H1 (cell line): ENCODE measurements at regions of chr1 and their contacts with region 1.

Region 1: DNA sequence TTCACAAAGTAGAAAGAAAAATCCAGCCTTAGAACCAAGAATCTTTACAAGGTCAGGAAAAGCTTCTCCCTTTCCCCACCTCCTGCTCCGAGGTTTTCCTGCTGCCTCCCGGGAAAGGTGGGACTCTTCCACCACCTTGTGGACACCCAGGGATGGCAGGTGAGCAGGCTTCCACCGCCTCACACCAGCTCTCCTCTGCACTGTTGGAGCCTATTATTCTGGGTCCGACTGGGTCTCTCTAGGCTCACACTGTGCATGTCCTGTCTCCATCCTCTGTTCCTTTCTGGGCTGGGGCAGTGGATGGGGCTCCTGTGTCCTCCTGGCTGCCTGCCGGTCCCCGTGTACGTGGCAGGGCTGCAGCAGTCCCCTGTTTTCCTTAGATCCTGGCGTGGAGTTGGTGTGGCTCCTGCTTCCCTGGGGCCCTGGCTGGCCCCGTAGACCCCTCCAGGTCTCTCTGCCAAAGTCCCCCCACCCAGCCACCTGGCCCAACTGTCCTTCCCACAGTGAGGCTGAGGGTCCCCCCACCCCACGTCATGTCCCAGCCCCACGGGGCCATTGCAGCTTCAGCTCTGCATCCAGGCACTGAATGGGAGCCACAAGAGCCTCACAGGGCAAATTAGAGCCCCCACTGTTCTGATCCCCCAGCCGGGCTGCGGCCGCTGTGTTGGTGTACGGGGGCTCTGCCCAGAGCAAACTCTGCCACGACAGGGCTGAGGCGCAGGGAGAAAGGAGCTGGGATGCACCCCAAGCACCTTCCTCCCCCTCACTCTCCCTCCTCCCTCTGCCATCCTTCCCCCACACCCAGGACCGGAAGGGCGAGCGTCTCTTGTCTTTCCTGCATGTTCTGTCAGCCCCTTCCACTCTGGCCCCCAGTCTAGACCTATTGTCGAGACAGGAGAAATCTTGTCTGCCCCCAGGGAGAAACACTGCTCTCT is 3.3 kb upstream of the SLC45A1 start:
- DNase-seq: peak; percentile 46 to 86
- H3K4me3 ChIP-seq: no peak overlapping the region
- H3K27ac ChIP-seq: no peak overlapping the region
- H3K4me1 ChIP-seq: peaks cover 0 to 16% (median 10%) of the 10 kb centered on the region in 4 experiments; a peak in 6 of 7 replicates
- H3K27me3 ChIP-seq: peaks cover 0 to 25% (median 13%) of the 10 kb centered on the region in 4 experiments; a peak in 6 of 7 replicates
- CTCF ChIP-seq: peak; percentile 94 to 97 (median 96)
- EP300 ChIP-seq: no peak
- POLR2A ChIP-seq: no peak
- RAD21 ChIP-seq: peak; percentile 99 to 100

Region 2: DNA sequence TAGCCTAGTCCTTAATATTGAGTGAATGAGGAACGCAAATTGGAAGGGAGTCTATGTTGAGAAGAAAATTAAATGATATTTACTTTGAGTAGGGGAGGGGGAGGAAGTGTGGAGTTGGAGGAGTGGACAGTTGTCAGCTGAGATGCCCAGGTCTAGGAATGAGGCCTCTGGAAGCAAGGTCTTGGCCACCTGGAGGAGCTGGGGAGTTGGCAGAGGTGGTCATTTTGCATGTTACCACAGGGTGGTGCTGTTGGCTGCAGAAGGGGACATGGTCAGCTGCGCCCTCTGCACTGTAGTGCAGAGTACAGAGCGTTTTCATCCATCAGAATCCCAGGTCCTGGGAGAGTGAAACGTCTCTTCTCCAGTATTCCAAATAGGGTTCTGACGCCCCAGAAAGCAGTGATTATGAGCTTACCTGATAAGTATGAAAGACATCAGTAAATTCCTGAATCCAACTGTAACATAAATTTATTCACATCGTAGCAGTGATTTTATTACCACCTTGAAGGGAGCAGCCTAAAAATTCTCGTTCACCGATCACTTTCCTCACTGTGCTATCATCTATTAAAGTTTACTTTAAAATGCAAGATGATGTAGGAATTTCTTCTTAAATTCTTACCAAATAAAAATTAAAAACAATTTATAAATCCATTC is 339.3 kb before region 1 on chr1:
- CTCF ChIA-PET with region 1: interaction called, 249 read pairs
- POLR2A ChIA-PET with region 1: interaction called, 3 read pairs
- DNase-seq: peak in 1 of 2 experiments; percentile 90
- H3K4me3 ChIP-seq: no peak overlapping the region
- H3K27ac ChIP-seq: no peak overlapping the region
- H3K4me1 ChIP-seq: no peaks in the 10 kb centered on the region
- H3K27me3 ChIP-seq: no peaks in the 10 kb centered on the region
- CTCF ChIP-seq: peak; percentile 97 to 100 (median 100)
- EP300 ChIP-seq: no peak
- POLR2A ChIP-seq: no peak
- RAD21 ChIP-seq: peak; percentile 93

Region 3: DNA sequence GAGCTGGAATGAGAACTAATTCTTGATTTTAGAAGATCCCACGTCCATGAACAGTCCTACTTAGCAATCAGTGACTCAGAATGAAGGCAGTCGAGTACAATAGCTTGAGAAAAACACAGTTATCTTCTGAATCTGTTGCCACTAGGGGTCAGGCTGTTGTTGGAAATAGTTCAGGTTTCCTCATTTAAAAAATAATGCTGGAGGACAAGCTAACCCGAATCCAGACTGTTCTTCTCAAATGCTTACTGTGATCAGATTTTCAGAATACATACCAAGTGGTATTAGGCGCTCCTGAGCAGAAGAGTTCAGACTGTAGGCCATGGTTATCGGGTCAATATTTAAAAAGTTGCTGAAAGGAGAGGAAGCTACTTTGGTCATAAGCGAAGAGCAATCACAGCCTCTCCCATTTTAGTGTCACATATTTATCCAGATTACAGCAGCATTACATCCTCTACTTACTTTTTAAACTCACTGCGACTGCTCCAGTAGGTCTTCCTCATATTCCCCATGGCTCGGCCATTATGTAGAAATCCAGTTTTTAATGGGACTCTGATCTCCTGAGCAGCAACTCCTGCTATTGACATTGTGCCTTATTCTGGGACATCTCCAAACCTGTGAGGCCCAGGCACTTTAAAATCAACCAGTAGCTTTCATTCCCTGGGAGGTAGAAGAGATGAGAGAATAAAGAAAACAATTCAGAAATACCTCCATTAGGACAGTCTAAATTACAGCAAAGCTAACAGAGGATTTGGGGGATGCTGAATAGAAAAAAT is 299.4 kb before region 1 on chr1:
- CTCF ChIA-PET with region 1: interaction called, 211 read pairs
- POLR2A ChIA-PET with region 1: interaction called, 8 read pairs
- DNase-seq: no peak
- H3K4me3 ChIP-seq: no peak overlapping the region
- H3K27ac ChIP-seq: no peak overlapping the region
- H3K4me1 ChIP-seq: peaks cover 4 to 15% (median 10%) of the 10 kb centered on the region in 4 experiments; a peak in 6 of 7 replicates
- H3K27me3 ChIP-seq: no peaks in the 10 kb centered on the region
- CTCF ChIP-seq: peak in 2 of 3 experiments; percentile 62 to 69; a peak in 3 of 4 replicates
- EP300 ChIP-seq: no peak
- POLR2A ChIP-seq: no peak
- RAD21 ChIP-seq: peak; percentile 81 to 83

Region 4: DNA sequence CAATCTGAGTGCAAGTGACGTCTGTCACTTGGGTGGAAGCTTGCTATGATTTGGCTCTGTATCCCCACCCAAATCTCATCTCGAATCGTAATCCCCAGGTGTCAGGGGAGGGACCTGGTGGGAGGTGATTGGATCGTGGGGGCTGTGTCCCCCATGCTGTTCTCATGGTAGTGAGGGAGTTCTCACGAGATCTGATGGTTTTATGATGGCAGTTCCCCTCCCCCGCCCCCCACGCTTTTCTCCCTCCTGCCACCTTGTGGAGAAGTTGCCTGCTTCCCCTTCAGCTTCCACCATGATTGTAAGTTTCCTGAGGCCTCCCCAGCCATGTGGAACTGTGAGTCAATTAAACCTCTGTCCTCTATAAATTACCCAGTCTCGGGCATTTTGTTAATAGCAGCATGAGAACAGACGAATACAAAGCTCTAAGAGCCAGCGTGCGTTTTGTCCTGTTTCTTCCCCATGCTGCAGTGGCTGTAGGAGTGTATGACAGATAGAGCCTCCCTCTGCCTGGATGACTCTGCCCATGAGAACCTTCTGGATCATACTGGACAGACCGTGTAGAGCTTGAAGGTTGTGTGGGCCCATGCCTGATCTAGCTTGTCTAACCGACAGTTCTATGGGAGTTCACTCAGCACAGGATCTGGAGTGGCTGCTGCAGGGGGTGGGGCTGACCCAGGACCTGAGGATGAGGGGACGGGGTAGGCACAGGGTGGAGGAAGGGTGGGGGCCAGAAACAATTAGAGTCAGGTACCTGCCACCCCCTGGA is 148.8 kb before region 1 on chr1:
- CTCF ChIA-PET with region 1: interaction called, 46 read pairs
- POLR2A ChIA-PET with region 1: interaction called, 3 read pairs
- DNase-seq: no peak
- H3K4me3 ChIP-seq: no peak overlapping the region; a peak in 1 of 8 replicates
- H3K27ac ChIP-seq: peak overlapping the region; percentile 75; the same call in 1 of the 2 replicates
- H3K4me1 ChIP-seq: peaks cover 12 to 18% (median 15%) of the 10 kb centered on the region in 4 experiments
- H3K27me3 ChIP-seq: no peaks in the 10 kb centered on the region
- CTCF ChIP-seq: peak; percentile 44 to 55 (median 46)
- EP300 ChIP-seq: no peak
- POLR2A ChIP-seq: no peak
- RAD21 ChIP-seq: peak; percentile 35 to 54; a peak in 3 of 4 replicates

Region 5: GRCh38 chr1:8247811-8248436 is 66.7 kb before region 1 on chr1:
- CTCF ChIA-PET with region 1: interaction called, 18 read pairs
- POLR2A ChIA-PET with region 1: no interaction called
- DNase-seq: no peak
- H3K4me3 ChIP-seq: no peak overlapping the region
- H3K27ac ChIP-seq: no peak overlapping the region
- H3K4me1 ChIP-seq: no peaks in the 10 kb centered on the region; a peak in 1 of 7 replicates
- H3K27me3 ChIP-seq: no peaks in the 10 kb centered on the region
- CTCF ChIP-seq: no peak
- EP300 ChIP-seq: no peak
- POLR2A ChIP-seq: no peak
- RAD21 ChIP-seq: no peak

Region 6: GRCh38 chr1:8329439-8329838 is 14.8 kb after region 1 on chr1:
- CTCF ChIA-PET with region 1: interaction called, 30 read pairs
- POLR2A ChIA-PET with region 1: no interaction called
- DNase-seq: no peak
- H3K4me3 ChIP-seq: no peak overlapping the region
- H3K27ac ChIP-seq: no peak overlapping the region
- H3K4me1 ChIP-seq: no peaks in the 10 kb centered on the region; a peak in 1 of 7 replicates
- H3K27me3 ChIP-seq: no peaks in the 10 kb centered on the region
- CTCF ChIP-seq: no peak
- EP300 ChIP-seq: no peak
- POLR2A ChIP-seq: no peak
- RAD21 ChIP-seq: no peak